ENCODE measurements at regions of chr18 and their contacts with region 1.

Region 1: GRCh38 chr18:26548429-26549262 is at the start of gene KCTD1:
- H3K4me3 ChIP-seq: peak within 1 kb of the TSS; percentile 79
- H3K27ac ChIP-seq: peak within 1 kb of the TSS; percentile 96
- H3K4me1 ChIP-seq: peaks cover 11% of the 10 kb centered on the region
- CTCF ChIP-seq: no peak

Region 2: DNA sequence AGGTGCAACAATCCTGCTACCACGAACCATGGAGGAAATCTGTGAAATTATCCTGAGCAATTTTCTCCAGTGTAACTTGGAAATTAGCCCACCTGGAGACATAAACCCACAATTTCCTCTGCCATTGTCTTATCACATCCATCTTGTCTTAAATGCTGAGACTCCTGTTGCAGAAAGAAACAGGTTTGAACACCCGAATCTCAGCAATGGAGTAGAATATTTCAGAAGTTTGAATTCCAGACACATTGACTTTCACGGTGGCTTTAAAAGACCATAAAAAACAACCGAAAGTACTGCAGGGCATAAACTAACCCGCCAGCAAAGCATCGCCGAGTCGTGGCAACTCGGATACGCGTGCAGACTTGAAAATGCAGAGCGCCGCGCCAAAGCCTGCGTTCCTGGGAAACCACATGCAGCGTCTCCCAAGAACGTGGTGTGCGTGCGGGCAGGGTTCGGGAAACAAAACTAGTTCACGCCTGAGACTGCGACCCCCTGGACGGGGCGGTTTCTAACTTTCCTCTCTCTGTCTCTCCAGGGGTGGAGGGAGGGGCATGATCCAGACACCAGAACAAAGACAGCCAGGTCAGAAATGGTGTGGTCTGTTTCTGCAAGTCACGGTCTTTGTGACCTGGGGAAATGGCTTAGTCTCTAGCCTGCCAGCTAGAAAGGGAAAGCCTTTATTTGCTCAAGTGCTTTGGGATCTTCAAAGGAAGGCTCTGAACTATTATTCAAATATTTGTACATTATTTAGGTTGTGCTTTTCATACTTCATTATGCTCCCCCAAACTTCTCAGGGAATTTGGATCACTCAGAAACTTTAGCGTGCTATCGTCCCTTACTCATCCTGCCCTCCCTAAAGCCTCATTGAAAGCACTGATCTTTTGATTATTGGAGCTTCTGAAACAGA is 26.6 kb after region 1 on chr18:
- CTCF ChIA-PET with region 1: interaction called, 4 read pairs
- POLR2A ChIA-PET with region 1: interaction called, 13 read pairs
- H3K4me3 ChIP-seq: peak overlapping the region; percentile 33
- H3K27ac ChIP-seq: peak overlapping the region; percentile 33; the same call in 1 of the 2 replicates
- H3K4me1 ChIP-seq: peaks cover 9% of the 10 kb centered on the region
- CTCF ChIP-seq: no peak

Region 3: DNA sequence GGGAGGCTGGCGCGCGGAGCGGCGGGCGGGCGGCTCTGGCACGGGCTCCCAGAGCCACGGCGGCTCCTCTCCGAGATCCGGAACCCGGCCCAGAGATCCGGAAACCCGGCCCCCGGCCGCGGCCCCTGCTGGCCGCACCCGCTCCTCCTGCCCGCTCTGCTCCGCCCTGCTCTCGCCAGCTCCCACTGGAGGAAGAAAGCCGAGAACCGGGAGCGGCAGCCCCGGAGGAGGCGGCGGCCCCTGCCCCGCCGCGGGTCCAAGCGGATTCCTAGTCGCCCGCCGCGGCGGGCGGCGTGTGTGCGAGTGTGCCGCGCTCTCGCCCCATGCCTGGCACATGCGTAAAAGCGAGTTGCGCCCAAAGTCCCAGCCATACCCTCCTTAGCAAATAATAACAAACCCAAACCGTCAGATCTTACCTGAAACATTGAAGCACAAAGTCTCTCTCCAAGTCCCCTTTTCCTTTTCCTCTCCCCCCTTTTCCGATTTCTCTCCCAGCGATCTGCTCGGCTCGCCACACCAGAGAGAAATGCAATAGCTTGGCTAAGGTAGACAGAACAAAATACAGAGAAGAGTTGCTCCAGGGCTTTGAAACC is 108.4 kb after region 1 on chr18:
- CTCF ChIA-PET with region 1: interaction called, 3 read pairs
- POLR2A ChIA-PET with region 1: interaction called, 13 read pairs
- H3K4me3 ChIP-seq: peak overlapping the region; percentile 58
- H3K27ac ChIP-seq: peak overlapping the region; percentile 65; the same call in 1 of the 2 replicates
- H3K4me1 ChIP-seq: peaks cover 17% of the 10 kb centered on the region
- CTCF ChIP-seq: peak; percentile 36; the same call in 1 of the 2 replicates

Measured in HEK293 (cell line).